ENCODE measurements at regions of chr10 and their contacts with region 1.

Region 1: GRCh38 chr10:117260084-117260483 is 19.2 kb downstream of the SLC18A2 start:
- DNase-seq: no peak
- ATAC-seq: no peak
- H3K4me3 ChIP-seq: no peak overlapping the region
- H3K27ac ChIP-seq: no peak overlapping the region
- H3K4me1 ChIP-seq: no peaks in the 10 kb centered on the region
- H3K27me3 ChIP-seq: peaks cover 0 to 82% (median 53%) of the 10 kb centered on the region in 7 donors
- CTCF ChIP-seq: no peak

Region 2: GRCh38 chr10:115744098-115744497 is 1516.0 kb before region 1 on chr10:
- intact Hi-C with region 1: loop called in 1 of 10 experiments (anchors 5 kb)
- DNase-seq: no peak
- ATAC-seq: no peak
- H3K4me3 ChIP-seq: no peak overlapping the region
- H3K27ac ChIP-seq: no peak overlapping the region
- H3K4me1 ChIP-seq: no peaks in the 10 kb centered on the region
- H3K27me3 ChIP-seq: no peaks in the 10 kb centered on the region
- CTCF ChIP-seq: no peak

Measured in heart right ventricle (tissue), 16 donors.